ENCODE measurements at regions of chr13 and their contacts with region 1.

Region 1: DNA sequence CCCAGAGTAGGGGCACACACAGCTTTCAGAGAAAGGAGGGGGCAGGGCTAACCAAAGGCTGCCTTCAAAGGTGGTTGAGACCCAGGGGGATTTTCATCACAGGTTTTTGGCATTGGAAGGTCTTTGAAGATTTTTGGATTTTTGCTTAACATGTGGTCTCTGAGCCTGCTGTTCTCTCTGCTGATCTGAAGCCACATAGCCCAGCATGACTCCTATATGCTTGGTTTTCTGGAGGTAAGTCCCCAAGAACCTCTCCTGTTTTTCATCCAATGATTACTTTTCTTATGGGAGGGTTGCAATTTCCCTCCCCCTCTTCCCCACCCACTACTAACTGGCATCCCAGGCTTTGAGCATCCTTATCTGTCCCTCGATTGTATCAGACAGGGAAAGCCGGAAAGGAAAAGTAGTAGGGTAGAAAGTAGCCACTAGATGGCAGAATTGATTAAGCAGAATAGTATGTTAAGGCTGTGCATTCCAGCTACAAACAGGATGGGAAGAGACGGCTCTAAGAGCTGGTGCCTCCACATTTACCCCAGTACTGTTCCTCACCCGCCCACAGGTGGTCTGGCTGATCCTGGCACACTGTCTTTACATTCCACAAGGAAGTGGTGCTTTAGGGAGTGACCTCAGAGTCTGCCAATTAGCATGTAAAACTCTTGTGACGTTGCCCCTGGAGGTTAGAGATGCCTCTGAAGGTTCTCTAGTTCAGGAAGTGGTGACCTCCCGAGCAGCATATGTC is 218.9 kb upstream of the EDNRB start:
- DNase-seq: peak; percentile 5 to 49 (median 29)
- H3K4me3 ChIP-seq: peak overlapping the region in 1 of 3 experiments; percentile 56
- H3K4me3 Mint-ChIP-seq: peak overlapping the region; percentile 70 to 72
- H3K27ac ChIP-seq: no peak overlapping the region
- H3K27ac Mint-ChIP-seq: peak overlapping the region in 1 of 7 donors; percentile 37
- H3K4me1 ChIP-seq: peaks cover 3 to 5% of the 10 kb centered on the region in 2 donors
- H3K4me1 Mint-ChIP-seq: peaks cover 7% of the 10 kb centered on the region
- H3K27me3 ChIP-seq: no peaks in the 10 kb centered on the region
- H3K27me3 Mint-ChIP-seq: peaks cover 0 to 2% (median 0%) of the 10 kb centered on the region in 3 donors
- CTCF ChIP-seq: peak; percentile 77

Region 2: GRCh38 chr13:78978381-78978998 is 840.9 kb after region 1 on chr13:
- intact Hi-C with region 1: loop called (anchors 5 kb)
- DNase-seq: peak; percentile 3 to 30 (median 30)
- H3K4me3 ChIP-seq: no peak overlapping the region
- H3K4me3 Mint-ChIP-seq: no peak overlapping the region
- H3K27ac ChIP-seq: no peak overlapping the region
- H3K27ac Mint-ChIP-seq: no peak overlapping the region
- H3K4me1 ChIP-seq: no peaks in the 10 kb centered on the region
- H3K4me1 Mint-ChIP-seq: no peaks in the 10 kb centered on the region
- H3K27me3 ChIP-seq: no peaks in the 10 kb centered on the region
- H3K27me3 Mint-ChIP-seq: peaks cover 3 to 12% (median 4%) of the 10 kb centered on the region in 3 donors
- CTCF ChIP-seq: peak; percentile 78

Measured in CD14-positive monocyte (primary cell).